AG04449 (cell line): ENCODE measurements at regions of chr10 and their contacts with region 1.

Region 1: DNA sequence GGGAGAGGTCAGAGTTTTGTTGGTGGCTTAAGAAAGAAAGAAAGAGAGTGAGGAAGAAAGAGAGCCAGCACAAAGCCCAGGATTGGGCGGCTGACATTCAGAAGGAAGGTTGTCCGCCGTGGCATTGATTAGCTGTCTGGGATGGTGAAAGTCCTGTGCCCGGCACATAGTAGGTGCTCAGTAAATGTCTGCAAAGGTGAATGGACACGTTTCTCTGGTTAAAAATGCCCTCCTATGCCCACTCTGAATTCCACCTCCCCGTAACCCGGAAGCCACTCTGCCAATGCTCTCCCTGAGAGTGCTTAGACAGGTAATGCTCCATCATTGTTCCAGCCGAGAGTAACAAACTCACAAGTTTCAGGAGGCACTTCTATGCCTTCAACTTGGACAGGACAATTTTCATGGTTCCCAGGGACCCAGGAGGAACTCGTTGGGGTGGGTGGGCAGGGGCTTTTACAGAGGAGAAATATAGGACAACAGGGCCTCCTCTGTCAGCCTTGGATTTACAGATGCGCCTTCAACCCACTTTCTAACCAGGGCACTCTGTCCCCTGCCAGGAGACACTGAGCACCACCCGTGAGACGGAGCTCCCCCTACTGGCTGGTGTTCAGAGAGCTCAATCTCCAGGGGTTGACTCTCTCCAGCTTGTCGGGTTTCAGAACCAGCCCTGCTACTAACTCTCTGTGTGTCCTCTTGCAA is 411.5 kb upstream of the ZMIZ1 start:
- DNase-seq: no peak
- H3K4me3 ChIP-seq: no peak overlapping the region
- CTCF ChIP-seq: peak; percentile 84

Region 2: GRCh38 chr10:78630944-78631838 is 26.1 kb before region 1 on chr10:
- CTCF ChIA-PET with region 1: interaction called, 11 read pairs
- POLR2A ChIA-PET with region 1: no interaction called
- DNase-seq: no peak
- H3K4me3 ChIP-seq: no peak overlapping the region
- CTCF ChIP-seq: no peak

Region 3: DNA sequence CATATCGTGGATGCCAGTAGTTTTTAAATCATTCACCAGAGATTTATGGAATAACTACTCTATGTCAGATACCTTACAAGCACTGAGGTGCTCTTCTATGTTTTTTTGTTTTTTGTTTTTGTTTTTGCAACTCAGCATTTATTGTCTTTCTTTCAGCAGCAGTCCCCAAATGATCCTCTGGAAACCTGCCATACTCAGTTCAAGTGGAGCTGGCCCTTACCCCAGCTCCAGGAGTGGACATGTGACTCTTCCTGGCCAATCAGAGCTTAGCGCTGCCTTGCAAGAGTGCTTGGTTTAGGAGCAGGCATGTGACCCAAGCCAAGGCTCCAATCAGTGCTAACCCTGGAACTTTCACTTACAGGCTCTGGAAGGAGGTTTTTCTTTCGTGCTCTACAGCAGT is 54.8 kb after region 1 on chr10:
- CTCF ChIA-PET with region 1: no interaction called
- POLR2A ChIA-PET with region 1: no interaction called
- DNase-seq: no peak
- H3K4me3 ChIP-seq: no peak overlapping the region
- CTCF ChIP-seq: no peak